ENCODE measurements at regions of chr2 and their contacts with region 1.

Region 1: GRCh38 chr2:207473049-207473930 is 56.5 kb upstream of the CREB1 start:
- DNase-seq: peak in 1 of 2 donors; percentile 65
- ATAC-seq: peak in 2 of 3 donors; percentile 57 to 69
- H3K4me3 ChIP-seq: no peak overlapping the region
- H3K4me3 Mint-ChIP-seq: no peak overlapping the region
- H3K27ac ChIP-seq: no peak overlapping the region
- H3K27ac Mint-ChIP-seq: no peak overlapping the region
- H3K4me1 ChIP-seq: peaks cover 6% of the 10 kb centered on the region
- H3K4me1 Mint-ChIP-seq: peaks cover 10 to 16% of the 10 kb centered on the region in 2 donors
- H3K27me3 ChIP-seq: no peaks in the 10 kb centered on the region
- H3K27me3 Mint-ChIP-seq: peaks cover 6 to 21% of the 10 kb centered on the region in 2 donors
- CTCF ChIP-seq: no peak

Region 2: DNA sequence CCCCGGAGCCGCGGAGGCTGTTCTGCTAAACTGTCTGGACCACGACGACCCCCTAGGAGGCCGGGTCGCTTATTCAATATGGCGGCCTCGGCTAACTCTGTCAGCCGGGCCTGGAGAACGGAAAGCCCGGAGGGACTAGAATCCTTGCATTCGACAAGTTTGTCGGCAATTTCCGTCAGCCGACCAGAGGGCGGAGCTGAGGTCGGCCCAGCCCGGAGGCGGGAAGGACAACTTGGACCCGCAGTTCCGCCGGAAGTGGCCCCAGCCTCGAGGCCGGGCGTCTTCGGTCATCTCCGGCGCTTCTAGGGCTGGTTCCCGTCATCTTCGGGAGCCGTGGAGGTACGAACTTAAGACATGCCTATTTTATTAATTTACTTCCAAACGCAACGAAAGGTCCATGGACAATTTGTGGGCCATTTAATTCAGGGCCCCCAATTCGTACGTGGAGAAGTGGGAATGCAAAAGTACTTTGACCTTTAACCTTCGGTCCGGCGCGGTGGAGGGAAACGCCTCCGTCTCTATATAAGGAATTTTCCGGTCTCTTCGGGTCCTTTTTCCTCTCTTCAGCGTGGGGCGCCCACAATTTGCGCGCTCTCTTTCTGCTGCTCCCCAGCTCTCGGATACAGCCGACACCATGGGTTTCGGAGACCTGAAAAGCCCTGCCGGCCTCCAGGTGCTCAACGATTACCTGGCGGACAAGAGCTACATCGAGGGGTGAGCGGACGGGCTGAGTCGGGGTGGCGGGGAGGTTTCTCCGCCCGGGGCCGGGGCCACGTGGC is 1313.8 kb before region 1 on chr2 and contains the starts of genes EEF1B2 and NDUFS1:
- intact Hi-C with region 1: loop called (anchors 5 kb)
- DNase-seq: peak; percentile 95 to 99
- ATAC-seq: peak; percentile 85 to 96 (median 88)
- H3K4me3 ChIP-seq: peak within 1 kb of the TSS; percentile 89
- H3K4me3 Mint-ChIP-seq: peak within 1 kb of the TSS; percentile 99
- H3K27ac ChIP-seq: peak within 1 kb of the TSS; percentile 89
- H3K27ac Mint-ChIP-seq: peak within 1 kb of the TSS; percentile 99 to 100
- H3K4me1 ChIP-seq: peaks cover 18% of the 10 kb centered on the region
- H3K4me1 Mint-ChIP-seq: peaks cover 42 to 48% of the 10 kb centered on the region in 2 donors
- H3K27me3 ChIP-seq: no peaks in the 10 kb centered on the region
- H3K27me3 Mint-ChIP-seq: no peaks in the 10 kb centered on the region
- CTCF ChIP-seq: no peak
- total RNA-seq, gene EEF1B2: 354 to 404 (median 364) TPM
- total RNA-seq, gene NDUFS1: 44.0 to 47.8 (median 45.9) TPM

Region 3: GRCh38 chr2:206693399-206694137 is 779.7 kb before region 1 on chr2:
- intact Hi-C with region 1: loop called (anchors 1 kb)
- DNase-seq: peak in 1 of 2 donors; percentile 77
- ATAC-seq: peak in 2 of 3 donors; percentile 52 to 63
- H3K4me3 ChIP-seq: no peak overlapping the region
- H3K4me3 Mint-ChIP-seq: no peak overlapping the region
- H3K27ac ChIP-seq: no peak overlapping the region
- H3K27ac Mint-ChIP-seq: no peak overlapping the region
- H3K4me1 ChIP-seq: no peaks in the 10 kb centered on the region
- H3K4me1 Mint-ChIP-seq: no peaks in the 10 kb centered on the region
- H3K27me3 ChIP-seq: no peaks in the 10 kb centered on the region
- H3K27me3 Mint-ChIP-seq: peaks cover 3 to 7% of the 10 kb centered on the region in 2 donors
- CTCF ChIP-seq: peak; percentile 62

Region 4: DNA sequence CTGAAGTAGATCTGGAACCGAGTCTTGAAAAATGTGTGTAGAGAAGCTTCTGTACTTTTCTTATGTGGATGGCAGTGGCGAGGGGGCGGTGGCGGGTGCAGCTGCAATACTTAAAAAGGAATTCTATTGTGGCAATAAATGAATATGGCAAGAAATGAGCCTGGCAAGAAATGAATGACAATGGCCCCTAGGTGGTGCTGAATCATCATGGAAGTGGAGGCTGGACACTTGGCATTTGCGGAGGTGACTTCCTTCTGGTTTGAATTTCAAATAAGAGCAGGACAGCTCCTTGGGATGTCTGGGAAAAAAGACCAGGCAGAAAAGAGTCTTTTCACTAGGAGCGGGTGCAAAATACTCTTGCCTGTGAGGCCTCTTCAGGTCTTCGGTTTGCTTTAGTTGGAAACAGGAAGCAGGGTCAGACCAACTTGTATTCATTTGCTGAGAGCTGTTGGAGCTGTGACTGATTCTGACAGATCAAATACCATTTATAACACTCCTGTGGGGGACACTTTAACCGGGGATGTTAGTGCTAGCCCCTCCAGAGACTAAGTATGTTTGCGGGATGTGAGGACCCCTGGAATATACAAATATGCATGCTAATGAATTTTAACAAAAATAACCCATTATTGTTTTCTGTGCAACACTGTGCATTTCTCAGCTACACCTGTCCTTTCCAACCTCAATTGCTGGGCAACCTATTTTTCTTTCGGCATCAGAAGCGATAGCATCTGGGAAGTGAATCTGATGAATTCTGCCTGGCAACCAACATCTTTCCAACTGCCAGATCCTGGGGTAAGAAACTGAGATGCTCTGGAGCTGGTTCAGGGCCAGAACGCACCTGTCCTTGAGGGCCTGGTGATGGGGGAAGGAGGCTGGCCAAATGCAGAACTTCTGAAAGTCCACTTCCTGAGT is 672.5 kb before region 1 on chr2:
- intact Hi-C with region 1: loop called (anchors 1 kb)
- DNase-seq: peak; percentile 19 to 73
- ATAC-seq: peak; percentile 30 to 69 (median 69)
- H3K4me3 ChIP-seq: no peak overlapping the region
- H3K4me3 Mint-ChIP-seq: peak overlapping the region; percentile 75
- H3K27ac ChIP-seq: no peak overlapping the region
- H3K27ac Mint-ChIP-seq: peak overlapping the region in 1 of 2 donors; percentile 76
- H3K4me1 ChIP-seq: peaks cover 4% of the 10 kb centered on the region
- H3K4me1 Mint-ChIP-seq: peaks cover 7% of the 10 kb centered on the region in 2 donors
- H3K27me3 ChIP-seq: no peaks in the 10 kb centered on the region
- H3K27me3 Mint-ChIP-seq: peaks cover 0 to 4% of the 10 kb centered on the region in 2 donors
- CTCF ChIP-seq: peak; percentile 67

Region 5: DNA sequence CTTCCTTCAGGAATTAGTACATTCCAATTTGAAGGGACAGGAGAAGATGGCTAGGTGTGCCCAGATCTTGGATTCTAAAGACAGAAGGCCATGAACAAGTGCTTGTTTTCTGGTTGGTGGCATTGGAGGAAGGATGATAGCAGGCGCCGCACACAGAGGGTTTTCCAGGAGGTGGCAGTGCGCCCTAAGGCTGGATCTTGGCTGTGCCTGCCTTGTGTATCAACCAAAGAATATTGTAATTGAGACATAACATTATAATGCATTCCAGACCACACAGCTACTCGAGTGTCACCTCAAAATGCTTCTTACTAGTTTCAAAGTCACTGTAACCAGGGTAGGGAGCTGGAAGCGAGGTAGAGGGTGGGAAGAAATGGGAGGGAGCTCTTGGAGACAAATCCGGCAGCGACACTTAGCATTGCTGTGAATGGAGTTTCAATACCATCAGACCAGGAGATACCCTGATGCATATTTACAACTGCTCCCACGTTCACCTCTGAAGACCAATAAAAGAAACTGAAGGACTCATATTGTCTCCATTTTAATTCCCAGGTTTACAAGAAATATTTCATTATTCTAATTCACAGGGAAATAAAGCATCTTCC is 491.4 kb before region 1 on chr2:
- intact Hi-C with region 1: loop called (anchors 2 kb)
- DNase-seq: peak; percentile 21 to 67
- ATAC-seq: peak in 2 of 3 donors; percentile 46 to 52
- H3K4me3 ChIP-seq: no peak overlapping the region
- H3K4me3 Mint-ChIP-seq: no peak overlapping the region
- H3K27ac ChIP-seq: no peak overlapping the region
- H3K27ac Mint-ChIP-seq: no peak overlapping the region
- H3K4me1 ChIP-seq: peaks cover 5% of the 10 kb centered on the region
- H3K4me1 Mint-ChIP-seq: peaks cover 21 to 25% of the 10 kb centered on the region in 2 donors
- H3K27me3 ChIP-seq: no peaks in the 10 kb centered on the region
- H3K27me3 Mint-ChIP-seq: peaks cover 8 to 9% of the 10 kb centered on the region in 2 donors
- CTCF ChIP-seq: no peak

Region 6: DNA sequence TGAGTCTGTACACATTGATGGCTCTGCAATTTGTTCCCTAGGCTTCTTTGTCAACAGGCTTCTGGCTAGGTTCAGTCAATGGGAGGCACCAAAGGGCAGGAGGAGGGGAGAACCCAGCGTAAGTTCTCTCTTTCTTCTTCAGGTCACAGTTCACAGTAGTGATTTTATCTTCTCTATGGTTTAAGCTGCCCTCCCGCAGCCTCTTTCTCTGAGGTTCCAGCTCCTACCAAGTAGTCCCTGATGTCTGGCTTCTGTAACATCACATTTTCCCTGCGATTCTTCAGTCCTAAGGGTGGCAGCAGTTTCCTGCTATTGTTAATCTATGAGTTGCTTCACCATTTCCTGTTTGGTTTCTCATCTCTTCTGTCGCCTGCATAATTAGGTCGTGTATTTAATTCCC is 426.6 kb before region 1 on chr2:
- intact Hi-C with region 1: loop called (anchors 1 kb)
- DNase-seq: peak in 1 of 2 donors; percentile 70
- ATAC-seq: peak; percentile 58 to 82 (median 60)
- H3K4me3 ChIP-seq: no peak overlapping the region
- H3K4me3 Mint-ChIP-seq: no peak overlapping the region
- H3K27ac ChIP-seq: no peak overlapping the region
- H3K27ac Mint-ChIP-seq: peak overlapping the region in 1 of 2 donors; percentile 38
- H3K4me1 ChIP-seq: peaks cover 4% of the 10 kb centered on the region
- H3K4me1 Mint-ChIP-seq: peaks cover 8% of the 10 kb centered on the region in 2 donors
- H3K27me3 ChIP-seq: no peaks in the 10 kb centered on the region
- H3K27me3 Mint-ChIP-seq: peaks cover 3 to 34% of the 10 kb centered on the region in 2 donors
- CTCF ChIP-seq: no peak

Region 7: DNA sequence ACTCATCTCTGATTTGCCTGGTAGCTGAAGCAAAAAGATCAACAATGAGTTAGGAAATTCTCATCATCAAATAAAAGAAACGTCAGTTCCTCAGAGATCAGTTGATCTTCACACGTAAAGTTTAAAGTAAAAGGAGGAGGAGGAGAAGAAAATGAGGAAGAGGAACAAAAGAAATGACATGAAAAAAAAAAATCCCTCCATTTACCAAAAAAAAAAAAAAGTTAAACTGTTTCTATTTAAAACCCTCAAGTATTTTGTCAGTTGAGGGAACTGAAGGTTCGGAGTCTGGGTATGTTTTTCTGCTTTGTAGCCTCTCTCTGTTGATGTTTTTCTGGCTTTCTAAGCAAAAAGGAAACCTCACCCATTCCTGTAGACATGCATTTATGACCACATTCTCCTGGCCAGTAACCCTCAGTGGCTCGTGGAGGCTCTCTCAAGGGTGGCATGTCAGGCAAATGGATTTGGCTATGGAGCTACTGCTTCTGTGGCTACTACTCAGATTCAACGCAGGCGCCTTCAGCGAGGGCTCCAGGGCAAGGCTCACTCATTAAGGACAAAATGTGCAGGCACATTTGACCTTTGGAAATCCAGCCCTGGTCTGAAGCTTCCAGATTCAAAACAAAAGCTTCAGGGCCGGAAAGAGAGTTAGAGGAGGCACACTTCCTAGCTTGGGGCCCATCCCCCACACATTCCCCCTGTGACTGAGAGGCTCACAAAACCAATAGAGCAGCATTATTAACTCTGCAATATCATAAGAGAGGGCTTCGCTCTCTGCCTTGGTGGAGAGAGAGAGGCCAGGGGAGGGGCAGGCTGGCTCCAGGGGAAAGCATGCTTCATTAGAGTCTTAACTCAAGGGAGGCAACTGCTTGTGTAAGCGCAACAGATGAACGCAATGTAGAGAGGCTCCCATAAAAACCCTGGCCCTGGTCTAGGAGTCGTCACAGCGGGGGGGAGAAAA is 329.8 kb before region 1 on chr2:
- intact Hi-C with region 1: loop called (anchors 5 kb)
- DNase-seq: peak in 1 of 2 donors; percentile 76
- ATAC-seq: peak; percentile 63 to 64 (median 63)
- H3K4me3 ChIP-seq: peak overlapping the region; percentile 37
- H3K4me3 Mint-ChIP-seq: peak overlapping the region; percentile 89
- H3K27ac ChIP-seq: peak overlapping the region; percentile 95
- H3K27ac Mint-ChIP-seq: peak overlapping the region; percentile 87 to 88
- H3K4me1 ChIP-seq: peaks cover 25% of the 10 kb centered on the region
- H3K4me1 Mint-ChIP-seq: peaks cover 38 to 43% of the 10 kb centered on the region in 2 donors
- H3K27me3 ChIP-seq: no peaks in the 10 kb centered on the region
- H3K27me3 Mint-ChIP-seq: no peaks in the 10 kb centered on the region
- CTCF ChIP-seq: no peak

Measured in natural killer cell (primary cell).